ENCODE measurements at regions of chr3 and their contacts with region 1.

Region 1: GRCh38 chr3:4271834-4272233 is 31.3 kb upstream of the SETMAR start:
- DNase-seq: peak; percentile 42
- H3K4me3 ChIP-seq: no peak overlapping the region
- CTCF ChIP-seq: peak; percentile 56

Region 2: DNA sequence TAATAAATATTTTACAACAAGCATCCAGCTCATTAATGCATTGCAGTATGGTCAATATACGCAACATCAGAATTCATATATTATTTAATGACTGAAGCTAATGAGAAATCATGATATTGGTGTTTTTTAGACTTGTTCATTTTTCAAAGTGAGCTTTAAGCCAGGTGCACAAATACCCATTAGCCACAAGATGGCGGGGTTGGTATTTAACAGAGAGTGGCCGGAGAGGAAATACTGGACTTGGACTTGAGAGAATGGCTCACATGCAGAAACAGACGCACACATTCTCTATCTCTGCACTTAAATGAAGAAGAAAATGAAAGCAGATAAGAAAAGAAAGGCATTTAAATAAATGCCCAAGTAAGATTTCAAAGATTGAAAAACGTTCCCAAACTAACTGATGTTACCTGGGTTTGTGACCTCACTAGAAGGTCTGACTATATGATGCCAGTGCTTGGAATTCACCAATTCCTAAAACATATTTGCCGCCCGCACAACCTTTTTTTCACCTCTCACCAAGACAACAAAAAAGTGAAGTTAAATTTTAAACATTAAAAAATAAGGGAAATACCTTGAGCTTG is 1071.1 kb before region 1 on chr3:
- in situ Hi-C with region 1: loop called (anchors 5 kb)
- DNase-seq: peak; percentile 75
- H3K4me3 ChIP-seq: no peak overlapping the region
- CTCF ChIP-seq: peak; percentile 85